ENCODE measurements at regions of chr4 and their contacts with region 1.

Region 1: GRCh38 chr4:1519787-1520661 is 113.8 kb upstream of the NKX1-1 start:
- DNase-seq: peak in 1 of 7 donors; percentile 45
- H3K4me3 ChIP-seq: no peak overlapping the region
- H3K27ac ChIP-seq: no peak overlapping the region
- H3K4me1 ChIP-seq: no peaks in the 10 kb centered on the region
- H3K27me3 ChIP-seq: peaks cover 32% of the 10 kb centered on the region
- CTCF ChIP-seq: no peak
- POLR2A ChIP-seq: no peak

Region 2: DNA sequence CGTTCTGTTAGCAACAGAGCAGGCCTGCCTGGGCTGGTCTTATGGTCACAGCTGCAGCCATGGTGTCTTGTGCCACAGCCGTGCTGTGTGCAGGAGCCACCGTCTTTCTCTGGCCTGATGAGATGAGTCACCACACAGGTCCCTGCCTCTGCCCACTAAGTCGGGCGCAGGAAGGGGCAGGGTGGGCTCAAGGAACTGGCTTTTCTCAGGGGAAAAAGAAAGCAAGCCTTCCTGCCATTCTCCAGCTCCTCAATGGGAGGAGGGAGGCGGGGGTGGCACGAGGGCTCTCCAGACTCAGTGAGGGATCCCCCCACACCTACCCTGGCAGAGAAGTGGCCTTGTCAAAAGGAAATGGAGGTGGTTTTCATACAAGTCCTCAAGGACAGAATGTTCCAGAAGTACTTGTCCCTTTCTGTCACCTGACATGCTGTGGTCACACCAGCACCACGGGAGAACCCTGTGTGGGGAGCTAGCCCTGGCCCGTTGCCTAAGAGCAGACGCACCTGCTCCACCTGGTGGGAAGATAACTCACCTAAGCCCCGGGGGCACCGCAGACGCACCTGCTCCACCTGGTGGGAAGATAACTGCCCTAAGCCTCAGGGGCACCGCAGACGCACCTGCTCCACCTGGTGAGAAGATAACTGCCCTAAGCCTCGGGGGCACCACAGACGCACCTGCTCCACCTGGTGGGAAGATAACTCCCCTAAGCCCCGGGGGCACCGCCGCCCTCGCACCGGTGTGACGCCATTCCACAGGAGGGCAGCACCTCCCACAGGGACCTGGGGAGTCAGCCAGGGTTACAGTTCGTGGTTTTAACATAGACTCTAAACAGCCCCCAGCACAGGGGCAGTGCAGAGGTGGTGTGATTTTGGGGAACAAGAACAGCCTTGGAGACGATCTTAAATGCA is 154.5 kb before region 1 on chr4:
- intact Hi-C with region 1: loop called in 1 of 2 experiments (anchors 5 kb)
- DNase-seq: no peak
- H3K4me3 ChIP-seq: no peak overlapping the region
- H3K27ac ChIP-seq: no peak overlapping the region
- H3K4me1 ChIP-seq: peaks cover 0 to 10% of the 10 kb centered on the region in 2 donors
- H3K27me3 ChIP-seq: no peaks in the 10 kb centered on the region
- CTCF ChIP-seq: no peak
- POLR2A ChIP-seq: no peak

Region 3: DNA sequence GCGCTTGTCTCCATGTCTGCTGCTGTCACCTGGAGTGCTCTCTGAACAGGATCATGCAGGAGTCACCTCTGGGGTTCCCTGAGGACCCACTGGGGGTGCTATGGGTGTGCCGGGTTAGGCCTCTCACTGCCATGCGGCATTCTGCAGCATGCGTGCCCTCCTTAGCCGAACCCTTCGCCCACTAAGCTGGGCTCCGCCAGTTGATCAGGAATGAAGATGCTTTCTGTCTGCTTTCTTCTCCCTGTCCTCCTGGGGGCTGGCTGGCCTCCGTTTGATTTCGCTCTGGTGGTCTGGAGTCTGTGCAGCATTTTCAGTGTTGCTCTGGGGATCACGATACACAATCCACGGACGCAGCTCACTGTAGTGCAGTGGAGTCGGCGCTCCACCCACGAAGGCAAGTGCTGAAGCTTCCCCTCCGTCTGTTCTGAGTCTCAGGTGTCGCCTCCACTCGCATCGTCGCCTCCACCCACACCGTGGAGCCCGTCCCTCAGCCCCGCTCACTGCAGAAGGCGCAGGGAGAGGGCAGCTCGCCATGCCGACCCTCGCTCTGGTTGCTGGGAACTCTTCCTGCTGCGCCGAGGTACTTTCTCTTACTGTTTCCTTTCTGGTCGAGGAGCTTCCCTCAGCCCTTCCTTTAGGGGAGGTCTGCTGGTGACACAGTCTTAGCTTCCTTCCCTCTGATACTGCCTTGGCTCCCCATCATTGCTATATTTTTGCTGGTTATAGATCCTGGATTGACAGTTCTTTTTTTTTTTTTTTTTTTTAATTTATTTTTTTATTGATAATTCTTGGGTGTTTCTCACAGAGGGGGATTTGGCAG is 306.7 kb after region 1 on chr4:
- intact Hi-C with region 1: no loop called
- DNase-seq: no peak
- H3K4me3 ChIP-seq: no peak overlapping the region
- H3K27ac ChIP-seq: no peak overlapping the region
- H3K4me1 ChIP-seq: no peaks in the 10 kb centered on the region
- H3K27me3 ChIP-seq: no peaks in the 10 kb centered on the region
- CTCF ChIP-seq: no peak
- POLR2A ChIP-seq: no peak